ENCODE measurements at regions of chr18 and their contacts with region 1.

Region 1: DNA sequence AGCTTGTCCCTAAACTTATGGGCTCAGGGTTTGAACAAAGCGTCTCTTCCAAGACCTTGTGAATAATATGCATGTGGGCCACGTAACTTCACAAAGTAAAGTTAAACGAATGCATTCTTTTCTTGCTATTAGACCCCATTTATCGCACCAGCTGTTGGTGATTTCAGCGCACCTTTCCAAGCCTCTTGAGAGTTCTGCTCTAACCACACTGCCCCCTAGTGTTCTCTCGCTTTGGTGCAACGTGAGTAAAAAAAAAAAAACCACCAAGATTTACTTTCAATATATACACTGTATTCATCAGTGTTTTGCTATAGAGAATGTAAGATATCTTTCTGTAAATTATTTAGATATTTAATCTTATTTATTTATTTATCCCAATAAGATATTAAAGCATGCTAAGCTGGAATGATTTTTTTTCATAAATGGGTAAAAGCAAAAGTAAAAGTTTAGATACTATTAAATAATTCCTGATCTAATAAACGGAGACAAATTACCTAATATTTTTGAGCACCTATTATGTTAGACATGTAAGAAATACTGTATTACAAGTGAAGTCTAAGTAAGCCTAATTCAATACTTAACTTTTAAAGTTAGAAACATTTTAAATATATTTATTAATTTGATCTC is 459.5 kb downstream of the DLGAP1 start:
- DNase-seq: peak in 4 of 5 donors; percentile 43 to 49 (median 46)
- H3K4me3 ChIP-seq: no peak overlapping the region
- H3K4me3 Mint-ChIP-seq: no peak overlapping the region
- H3K27ac ChIP-seq: no peak overlapping the region
- H3K27ac Mint-ChIP-seq: no peak overlapping the region
- H3K4me1 ChIP-seq: no peaks in the 10 kb centered on the region
- H3K4me1 Mint-ChIP-seq: peaks cover 0 to 3% (median 0%) of the 10 kb centered on the region in 4 donors
- H3K27me3 ChIP-seq: no peaks in the 10 kb centered on the region
- H3K27me3 Mint-ChIP-seq: peaks cover 0 to 2% of the 10 kb centered on the region in 2 donors

Region 2: GRCh38 chr18:3983351-3983969 is 12.1 kb before region 1 on chr18:
- CTCF ChIA-PET with region 1: interaction called, 31 read pairs
- POLR2A ChIA-PET with region 1: no interaction called
- intact Hi-C with region 1: no loop called
- DNase-seq: no peak
- H3K4me3 ChIP-seq: no peak overlapping the region
- H3K4me3 Mint-ChIP-seq: peak overlapping the region in 1 of 8 donors; percentile 11
- H3K27ac ChIP-seq: no peak overlapping the region
- H3K27ac Mint-ChIP-seq: no peak overlapping the region
- H3K4me1 ChIP-seq: peaks cover 11% of the 10 kb centered on the region
- H3K4me1 Mint-ChIP-seq: peaks cover 16 to 24% (median 19%) of the 10 kb centered on the region in 4 donors
- H3K27me3 ChIP-seq: no peaks in the 10 kb centered on the region
- H3K27me3 Mint-ChIP-seq: no peaks in the 10 kb centered on the region